CD8-positive, alpha-beta T cell (primary cell): ENCODE measurements at regions of chr2 and their contacts with region 1.

Region 1: DNA sequence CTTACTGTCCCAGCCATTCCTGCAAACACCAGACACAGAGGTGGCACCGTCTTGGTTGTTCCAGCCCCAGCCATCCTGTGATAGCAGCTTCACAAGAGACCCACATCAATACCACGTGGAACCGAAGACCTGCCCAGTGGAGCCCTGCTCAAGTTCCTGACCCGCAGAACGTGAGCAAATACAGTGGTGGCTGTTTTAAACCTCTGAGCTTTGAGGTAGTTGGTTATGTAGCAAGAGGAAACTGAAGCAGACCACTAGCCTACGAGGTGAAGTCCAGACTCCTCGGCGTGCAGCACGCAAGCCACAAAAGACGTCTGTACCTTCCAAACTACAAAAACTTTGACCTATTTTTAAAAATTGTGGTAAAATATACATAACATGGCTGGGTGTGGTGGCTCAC is 96.1 kb upstream of the ODC1 start:
- DNase-seq: peak; percentile 2 to 86 (median 50)
- ATAC-seq: peak; percentile 97
- H3K4me3 ChIP-seq: no peak overlapping the region
- H3K4me3 Mint-ChIP-seq: peak overlapping the region; percentile 9
- H3K27ac ChIP-seq: no peak overlapping the region
- H3K27ac Mint-ChIP-seq: peak overlapping the region; percentile 38
- H3K4me1 ChIP-seq: peaks cover 19% of the 10 kb centered on the region
- H3K4me1 Mint-ChIP-seq: peaks cover 29% of the 10 kb centered on the region
- H3K27me3 ChIP-seq: peaks cover 0 to 2% of the 10 kb centered on the region in 2 experiments
- H3K27me3 Mint-ChIP-seq: peaks cover 17% of the 10 kb centered on the region
- CTCF ChIP-seq: no peak

Region 2: GRCh38 chr2:10493636-10494281 is 50.5 kb before region 1 on chr2:
- CTCF ChIA-PET with region 1: no interaction called
- POLR2A ChIA-PET with region 1: no interaction called
- intact Hi-C with region 1: loop called (anchors 5 kb)
- DNase-seq: peak; percentile 58 to 91 (median 83)
- ATAC-seq: peak; percentile 88
- H3K4me3 ChIP-seq: peak overlapping the region in 1 of 2 experiments; percentile 18
- H3K4me3 Mint-ChIP-seq: peak overlapping the region; percentile 43
- H3K27ac ChIP-seq: peak overlapping the region in 1 of 2 experiments; percentile 42
- H3K27ac Mint-ChIP-seq: peak overlapping the region; percentile 82
- H3K4me1 ChIP-seq: peaks cover 26% of the 10 kb centered on the region
- H3K4me1 Mint-ChIP-seq: peaks cover 28% of the 10 kb centered on the region
- H3K27me3 ChIP-seq: no peaks in the 10 kb centered on the region
- H3K27me3 Mint-ChIP-seq: peaks cover 8% of the 10 kb centered on the region
- CTCF ChIP-seq: no peak

Region 3: GRCh38 chr2:10557506-10558265 is 13.4 kb after region 1 on chr2:
- CTCF ChIA-PET with region 1: no interaction called
- POLR2A ChIA-PET with region 1: no interaction called
- intact Hi-C with region 1: no loop called
- DNase-seq: no peak
- ATAC-seq: no peak
- H3K4me3 ChIP-seq: no peak overlapping the region
- H3K4me3 Mint-ChIP-seq: no peak overlapping the region
- H3K27ac ChIP-seq: no peak overlapping the region
- H3K27ac Mint-ChIP-seq: no peak overlapping the region
- H3K4me1 ChIP-seq: no peaks in the 10 kb centered on the region
- H3K4me1 Mint-ChIP-seq: peaks cover 2% of the 10 kb centered on the region
- H3K27me3 ChIP-seq: no peaks in the 10 kb centered on the region
- H3K27me3 Mint-ChIP-seq: no peaks in the 10 kb centered on the region
- CTCF ChIP-seq: no peak